Activated CD4-positive, alpha-beta T cell treated with anti-CD3 and anti-CD28 coated beads for 36 hours (primary cell): ENCODE measurements at regions of chr1 and their contacts with region 1.

Region 1: DNA sequence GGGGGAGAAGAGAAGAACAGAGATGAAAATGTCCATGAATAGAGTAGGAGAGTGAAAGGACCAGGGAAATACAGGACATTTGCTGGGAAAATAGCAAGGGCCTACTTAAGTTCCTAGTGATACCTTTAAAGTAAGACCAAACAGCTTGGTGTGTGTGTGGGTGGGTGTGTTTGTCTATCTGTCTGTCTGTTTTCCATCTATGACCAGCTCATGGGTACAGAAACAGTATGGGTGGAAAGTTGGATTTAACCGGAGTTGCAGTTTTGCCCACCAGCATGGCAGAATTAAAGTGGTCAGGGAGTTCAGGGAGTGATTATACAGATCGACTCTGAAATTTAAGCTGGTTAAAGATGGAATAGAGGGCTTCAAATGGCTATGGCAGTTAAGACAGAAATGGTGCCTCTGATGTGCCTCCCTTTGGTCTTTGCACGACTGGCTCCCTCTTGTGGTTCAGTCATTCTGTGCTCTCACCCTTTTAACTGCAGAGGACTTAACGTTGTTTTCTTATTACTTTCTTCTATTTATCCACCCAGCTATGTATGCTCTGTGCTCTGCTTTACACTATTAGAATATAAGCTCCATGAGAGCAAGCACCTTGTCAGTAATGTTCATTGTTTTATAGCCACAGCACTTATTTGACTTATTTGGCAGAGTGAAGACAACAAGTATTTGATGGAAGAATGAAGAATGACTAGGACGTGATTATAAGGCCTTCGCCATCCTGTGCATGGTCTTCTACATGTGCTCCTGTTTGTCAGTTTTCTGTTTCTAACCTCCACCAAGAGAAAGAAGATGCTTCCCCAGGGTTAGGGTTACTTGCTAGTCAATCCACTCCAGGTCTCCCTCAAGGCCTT is 72.7 kb upstream of the AK4 start:
- DNase-seq: peak; percentile 77
- ATAC-seq: peak; percentile 92
- H3K4me3 Mint-ChIP-seq: no peak overlapping the region
- H3K27ac Mint-ChIP-seq: no peak overlapping the region
- H3K4me1 Mint-ChIP-seq: peaks cover 20% of the 10 kb centered on the region
- H3K27me3 Mint-ChIP-seq: peaks cover 3% of the 10 kb centered on the region

Region 2: GRCh38 chr1:64686828-64687724 is 388.3 kb before region 1 on chr1:
- CTCF ChIA-PET with region 1: interaction called, 3 read pairs
- POLR2A ChIA-PET with region 1: no interaction called
- intact Hi-C with region 1: loop called (anchors 1 to 10 kb)
- DNase-seq: peak; percentile 51
- ATAC-seq: peak; percentile 76
- H3K4me3 Mint-ChIP-seq: no peak overlapping the region
- H3K27ac Mint-ChIP-seq: no peak overlapping the region
- H3K4me1 Mint-ChIP-seq: peaks cover 5% of the 10 kb centered on the region
- H3K27me3 Mint-ChIP-seq: no peaks in the 10 kb centered on the region

Region 3: GRCh38 chr1:64744492-64745180 is 330.7 kb before region 1 on chr1 and contains the start of gene RAVER2:
- CTCF ChIA-PET with region 1: interaction called, 3 read pairs
- POLR2A ChIA-PET with region 1: no interaction called
- intact Hi-C with region 1: loop called in 1 of 2 experiments (anchors 1 kb)
- DNase-seq: peak; percentile 72
- ATAC-seq: peak; percentile 79
- H3K4me3 Mint-ChIP-seq: peak within 1 kb of the TSS; percentile 76
- H3K27ac Mint-ChIP-seq: peak within 1 kb of the TSS; percentile 70
- H3K4me1 Mint-ChIP-seq: peaks cover 17% of the 10 kb centered on the region
- H3K27me3 Mint-ChIP-seq: peaks cover 5% of the 10 kb centered on the region
- total RNA-seq, gene RAVER2: 3.2 to 3.6 TPM

Region 4: GRCh38 chr1:64909031-64909430 is 166.3 kb before region 1 on chr1:
- CTCF ChIA-PET with region 1: no interaction called
- POLR2A ChIA-PET with region 1: no interaction called
- intact Hi-C with region 1: no loop called
- DNase-seq: no peak
- ATAC-seq: no peak
- H3K4me3 Mint-ChIP-seq: no peak overlapping the region
- H3K27ac Mint-ChIP-seq: no peak overlapping the region
- H3K4me1 Mint-ChIP-seq: peaks cover 92% of the 10 kb centered on the region
- H3K27me3 Mint-ChIP-seq: no peaks in the 10 kb centered on the region

Region 5: GRCh38 chr1:65059930-65060538 is 15.3 kb before region 1 on chr1:
- CTCF ChIA-PET with region 1: interaction called, 70 read pairs
- POLR2A ChIA-PET with region 1: no interaction called
- intact Hi-C with region 1: loop called (anchors 1 kb)
- DNase-seq: no peak
- ATAC-seq: no peak
- H3K4me3 Mint-ChIP-seq: no peak overlapping the region
- H3K27ac Mint-ChIP-seq: no peak overlapping the region
- H3K4me1 Mint-ChIP-seq: peaks cover 51% of the 10 kb centered on the region
- H3K27me3 Mint-ChIP-seq: no peaks in the 10 kb centered on the region

Region 6: DNA sequence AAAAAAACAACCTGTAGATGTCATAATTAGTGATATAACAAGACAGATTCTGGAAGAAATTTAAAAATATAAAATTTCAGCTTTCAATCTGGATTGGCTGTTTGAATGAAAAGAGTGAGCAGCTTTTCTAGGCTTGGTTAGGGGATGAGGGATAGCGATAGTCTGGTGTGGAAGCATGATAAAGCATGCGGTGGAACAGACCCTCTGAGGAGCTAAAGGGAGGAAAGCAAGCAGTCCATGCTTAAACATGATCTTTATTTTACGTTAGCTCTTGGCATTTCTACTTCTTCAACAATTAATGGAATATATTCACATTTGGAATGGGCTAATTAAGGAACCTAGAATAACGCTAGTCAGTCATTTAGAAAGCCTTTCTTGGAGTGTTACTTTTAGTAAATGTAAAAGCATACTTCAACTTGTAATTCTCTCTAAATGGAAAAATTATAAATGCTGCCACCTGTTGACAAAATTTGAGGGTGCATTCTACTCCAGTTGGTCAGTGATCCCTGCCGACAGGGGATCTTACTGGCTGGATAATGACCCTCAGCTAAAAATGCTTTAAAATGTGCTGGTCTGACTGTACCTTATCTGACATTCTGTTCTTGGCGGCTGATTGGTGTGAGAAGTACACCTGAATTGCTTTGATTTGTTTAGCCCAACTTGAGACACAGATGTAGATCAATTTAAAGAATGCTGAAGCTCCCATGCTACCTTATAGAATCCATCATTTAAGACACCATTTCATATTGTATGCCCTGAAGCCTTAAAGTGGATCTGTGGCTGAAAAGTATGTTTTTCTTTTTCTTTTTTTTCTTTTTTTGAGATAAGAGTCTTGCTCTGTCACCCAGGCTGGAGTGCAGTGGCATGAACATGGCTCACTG is 133.9 kb after region 1 on chr1:
- CTCF ChIA-PET with region 1: interaction called, 12 read pairs
- POLR2A ChIA-PET with region 1: no interaction called
- intact Hi-C with region 1: no loop called
- DNase-seq: peak; percentile 20
- ATAC-seq: no peak
- H3K4me3 Mint-ChIP-seq: no peak overlapping the region
- H3K27ac Mint-ChIP-seq: no peak overlapping the region
- H3K4me1 Mint-ChIP-seq: peaks cover 25% of the 10 kb centered on the region
- H3K27me3 Mint-ChIP-seq: peaks cover 4% of the 10 kb centered on the region

Region 7: GRCh38 chr1:65419681-65420589 is 344.6 kb after region 1 on chr1:
- CTCF ChIA-PET with region 1: no interaction called
- POLR2A ChIA-PET with region 1: no interaction called
- intact Hi-C with region 1: no loop called
- DNase-seq: peak; percentile 99
- ATAC-seq: peak; percentile 96
- H3K4me3 Mint-ChIP-seq: no peak overlapping the region
- H3K27ac Mint-ChIP-seq: peak overlapping the region; percentile 94
- H3K4me1 Mint-ChIP-seq: peaks cover 13% of the 10 kb centered on the region
- H3K27me3 Mint-ChIP-seq: no peaks in the 10 kb centered on the region